Activated CD8-positive, alpha-beta T cell treated with anti-CD3 and anti-CD28 coated beads, Interleukin-2, amount 10 ng/mL, durations not matched to agents 7 days and 5 days (primary cell): ENCODE measurements at regions of chr6 and their contacts with region 1.

Region 1: GRCh38 chr6:2353412-2354137 is 108.2 kb upstream of the GMDS start:
- DNase-seq: peak; percentile 68
- ATAC-seq: no peak
- H3K4me3 Mint-ChIP-seq: no peak overlapping the region
- H3K27ac Mint-ChIP-seq: no peak overlapping the region
- H3K4me1 Mint-ChIP-seq: no peaks in the 10 kb centered on the region
- H3K27me3 Mint-ChIP-seq: no peaks in the 10 kb centered on the region

Region 2: DNA sequence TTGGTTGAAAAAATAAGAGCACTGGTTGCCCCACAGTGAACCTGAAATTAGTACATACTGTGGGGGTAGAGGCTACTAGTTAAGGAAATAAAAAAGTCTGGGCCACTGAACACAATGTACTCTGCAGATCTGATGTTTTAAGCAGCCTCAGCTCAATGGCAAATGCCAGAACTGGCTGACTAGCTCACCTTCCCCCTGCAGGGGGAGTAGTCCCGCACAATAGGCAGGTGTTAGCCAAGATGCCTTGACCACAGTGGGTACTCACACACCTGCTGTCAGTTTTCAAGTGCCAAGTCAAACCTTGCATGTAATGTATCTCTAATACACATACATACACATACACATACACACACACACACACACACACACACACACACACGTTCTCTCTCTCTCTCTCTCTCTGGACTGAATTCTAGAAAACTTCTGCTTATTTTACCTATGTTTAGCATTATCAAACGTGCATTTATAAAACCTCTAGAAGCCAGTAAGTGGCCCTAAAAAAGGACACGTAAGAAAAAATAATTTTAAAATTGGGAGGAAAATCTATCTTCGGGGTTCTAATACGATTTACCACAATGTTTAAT is 144.3 kb before region 1 on chr6:
- CTCF ChIA-PET with region 1: interaction called, 51 read pairs
- POLR2A ChIA-PET with region 1: interaction called, 3 read pairs
- DNase-seq: peak; percentile 58
- ATAC-seq: peak; percentile 82
- H3K4me3 Mint-ChIP-seq: no peak overlapping the region
- H3K27ac Mint-ChIP-seq: no peak overlapping the region
- H3K4me1 Mint-ChIP-seq: no peaks in the 10 kb centered on the region
- H3K27me3 Mint-ChIP-seq: peaks cover 1% of the 10 kb centered on the region